Activated CD4-positive, alpha-beta T cell treated with anti-CD3 and anti-CD28 coated beads for 36 hours (primary cell): ENCODE measurements at regions of chr5 and their contacts with region 1.

Region 1: DNA sequence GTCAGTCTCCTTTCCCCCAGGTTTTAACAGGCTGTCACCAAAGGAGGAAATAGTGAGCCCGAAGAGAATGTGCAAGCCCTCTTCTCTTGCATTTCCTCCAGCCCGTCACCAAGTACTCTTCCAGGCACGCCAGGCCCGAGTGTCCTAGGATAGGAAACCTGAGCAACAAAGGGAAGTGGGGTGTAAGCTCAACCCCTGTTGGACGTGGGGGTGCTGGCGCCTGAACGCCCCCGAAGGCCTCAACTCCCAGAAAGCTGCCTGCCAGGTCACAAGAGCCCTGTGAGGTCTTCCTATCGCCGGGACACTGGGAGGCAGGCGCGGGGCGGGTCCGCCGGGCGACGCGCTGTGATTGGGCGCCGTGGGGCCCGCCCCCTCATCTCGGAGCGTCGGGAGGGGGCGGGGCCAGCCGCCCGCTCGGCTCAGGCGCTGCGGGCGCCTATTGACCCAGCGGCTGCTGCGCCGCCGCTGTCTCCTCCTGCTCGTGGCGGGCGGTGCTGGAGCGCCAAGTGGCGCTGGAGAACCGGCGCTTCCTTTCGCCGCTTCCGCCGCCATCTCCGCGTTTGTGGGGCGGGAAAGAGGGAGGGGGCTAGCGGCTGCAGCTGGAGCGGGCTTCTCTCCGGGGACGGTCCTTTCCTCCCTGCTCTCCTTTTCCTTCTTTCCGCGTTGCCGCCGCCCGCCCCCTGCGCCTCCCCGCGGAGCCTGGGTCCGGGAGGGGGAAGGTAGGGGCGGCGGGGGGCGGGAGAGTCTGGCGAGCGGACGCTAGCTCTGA is 572 bp upstream of the MAN2A1 start:
- DNase-seq: peak; percentile 87
- ATAC-seq: peak; percentile 82
- H3K4me3 Mint-ChIP-seq: peak overlapping the region; percentile 95
- H3K27ac Mint-ChIP-seq: peak overlapping the region; percentile 92
- H3K4me1 Mint-ChIP-seq: peaks cover 36% of the 10 kb centered on the region
- H3K27me3 Mint-ChIP-seq: no peaks in the 10 kb centered on the region

Region 2: DNA sequence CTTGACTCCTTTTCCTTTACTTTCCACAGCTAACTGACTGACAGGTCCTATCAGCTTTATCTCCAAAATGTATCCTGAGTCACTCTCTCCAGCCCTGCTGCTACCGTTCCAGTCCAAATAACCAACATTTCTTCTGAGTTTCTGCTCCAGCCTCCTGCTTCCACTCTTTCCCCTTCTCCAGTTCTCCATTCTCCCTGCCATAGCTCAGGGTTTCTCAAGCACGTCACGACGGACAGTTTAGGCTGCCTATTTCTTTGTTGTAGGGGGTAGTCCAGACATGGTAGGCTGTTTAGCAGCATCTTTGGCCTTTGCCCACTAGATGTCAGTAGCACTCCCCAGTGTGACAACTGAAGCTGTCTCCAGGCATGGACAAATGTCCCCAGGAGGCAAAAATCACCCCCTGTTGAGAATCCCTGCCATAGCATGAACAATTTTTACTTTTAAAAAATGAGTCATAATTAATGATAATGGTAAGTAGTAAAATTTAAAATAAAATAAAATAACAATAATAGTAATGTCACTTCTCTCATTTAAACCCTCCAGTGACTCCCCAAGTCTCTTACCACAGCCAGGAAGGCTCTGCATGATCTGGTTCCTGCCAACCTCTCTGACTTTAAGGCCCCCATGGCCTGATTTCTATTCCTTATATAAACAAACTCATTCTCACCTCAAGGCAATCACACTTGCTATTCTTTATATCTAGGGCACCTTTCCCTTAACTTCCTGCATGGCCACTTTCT is 1046.8 kb before region 1 on chr5:
- CTCF ChIA-PET with region 1: interaction called, 3 read pairs
- POLR2A ChIA-PET with region 1: no interaction called
- intact Hi-C with region 1: loop called in 1 of 2 experiments (anchors 2 kb)
- DNase-seq: peak; percentile 71
- ATAC-seq: peak; percentile 98
- H3K4me3 Mint-ChIP-seq: no peak overlapping the region
- H3K27ac Mint-ChIP-seq: no peak overlapping the region
- H3K4me1 Mint-ChIP-seq: peaks cover 3% of the 10 kb centered on the region
- H3K27me3 Mint-ChIP-seq: peaks cover 3% of the 10 kb centered on the region

Region 3: GRCh38 chr5:109485030-109485429 is 204.1 kb before region 1 on chr5:
- CTCF ChIA-PET with region 1: no interaction called
- POLR2A ChIA-PET with region 1: no interaction called
- intact Hi-C with region 1: no loop called
- DNase-seq: no peak
- ATAC-seq: no peak
- H3K4me3 Mint-ChIP-seq: no peak overlapping the region
- H3K27ac Mint-ChIP-seq: no peak overlapping the region
- H3K4me1 Mint-ChIP-seq: no peaks in the 10 kb centered on the region
- H3K27me3 Mint-ChIP-seq: no peaks in the 10 kb centered on the region

Region 4: GRCh38 chr5:109676920-109677319 is 12.2 kb before region 1 on chr5:
- CTCF ChIA-PET with region 1: interaction called, 17 read pairs
- POLR2A ChIA-PET with region 1: no interaction called
- intact Hi-C with region 1: no loop called
- DNase-seq: no peak
- ATAC-seq: no peak
- H3K4me3 Mint-ChIP-seq: no peak overlapping the region
- H3K27ac Mint-ChIP-seq: no peak overlapping the region
- H3K4me1 Mint-ChIP-seq: no peaks in the 10 kb centered on the region
- H3K27me3 Mint-ChIP-seq: peaks cover 16% of the 10 kb centered on the region

Region 5: GRCh38 chr5:109921735-109922380 is 232.7 kb after region 1 on chr5:
- CTCF ChIA-PET with region 1: no interaction called
- POLR2A ChIA-PET with region 1: no interaction called
- intact Hi-C with region 1: loop called (anchors 5 to 10 kb)
- DNase-seq: peak; percentile 64
- ATAC-seq: peak; percentile 85
- H3K4me3 Mint-ChIP-seq: no peak overlapping the region
- H3K27ac Mint-ChIP-seq: peak overlapping the region; percentile 93
- H3K4me1 Mint-ChIP-seq: peaks cover 37% of the 10 kb centered on the region
- H3K27me3 Mint-ChIP-seq: no peaks in the 10 kb centered on the region

Region 6: DNA sequence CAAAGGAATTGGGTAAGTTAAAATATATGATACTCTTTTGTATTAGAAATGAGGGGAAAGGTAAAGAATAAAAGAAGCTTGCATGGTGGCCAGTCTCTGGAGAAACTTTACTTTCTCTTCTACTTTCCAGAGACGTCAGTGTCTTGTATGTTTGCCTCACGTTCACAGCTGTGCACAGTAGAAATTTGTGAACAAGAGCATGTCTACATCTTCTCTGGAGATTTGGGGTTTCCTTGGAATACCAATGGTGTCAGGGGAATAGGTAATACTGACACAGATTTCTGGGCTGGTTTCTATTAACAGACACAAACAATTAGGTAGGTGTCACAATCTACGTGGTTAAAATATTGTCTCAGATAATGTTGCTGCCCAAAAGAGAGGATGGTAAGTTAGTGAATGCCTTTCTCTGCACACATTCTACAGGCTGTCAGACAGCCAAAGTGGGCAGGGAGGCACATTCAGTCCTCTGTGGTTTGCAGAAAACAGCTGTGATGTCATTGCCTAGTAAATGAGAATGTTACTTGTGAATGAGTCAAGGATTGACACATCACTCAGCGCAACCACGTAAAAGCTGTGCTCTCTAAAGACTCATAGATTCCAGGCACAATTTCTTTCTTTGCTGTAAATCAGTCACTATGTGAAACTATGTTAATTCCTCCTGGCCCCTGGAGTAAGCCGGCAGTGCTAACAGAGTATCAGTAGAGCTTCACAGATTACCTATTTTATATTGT is 397.7 kb after region 1 on chr5:
- CTCF ChIA-PET with region 1: no interaction called
- POLR2A ChIA-PET with region 1: interaction called, 3 read pairs
- intact Hi-C with region 1: loop called (anchors 1 to 2 kb)
- DNase-seq: peak; percentile 81
- ATAC-seq: peak; percentile 90
- H3K4me3 Mint-ChIP-seq: peak overlapping the region; percentile 32
- H3K27ac Mint-ChIP-seq: peak overlapping the region; percentile 89
- H3K4me1 Mint-ChIP-seq: peaks cover 57% of the 10 kb centered on the region
- H3K27me3 Mint-ChIP-seq: no peaks in the 10 kb centered on the region

Region 7: DNA sequence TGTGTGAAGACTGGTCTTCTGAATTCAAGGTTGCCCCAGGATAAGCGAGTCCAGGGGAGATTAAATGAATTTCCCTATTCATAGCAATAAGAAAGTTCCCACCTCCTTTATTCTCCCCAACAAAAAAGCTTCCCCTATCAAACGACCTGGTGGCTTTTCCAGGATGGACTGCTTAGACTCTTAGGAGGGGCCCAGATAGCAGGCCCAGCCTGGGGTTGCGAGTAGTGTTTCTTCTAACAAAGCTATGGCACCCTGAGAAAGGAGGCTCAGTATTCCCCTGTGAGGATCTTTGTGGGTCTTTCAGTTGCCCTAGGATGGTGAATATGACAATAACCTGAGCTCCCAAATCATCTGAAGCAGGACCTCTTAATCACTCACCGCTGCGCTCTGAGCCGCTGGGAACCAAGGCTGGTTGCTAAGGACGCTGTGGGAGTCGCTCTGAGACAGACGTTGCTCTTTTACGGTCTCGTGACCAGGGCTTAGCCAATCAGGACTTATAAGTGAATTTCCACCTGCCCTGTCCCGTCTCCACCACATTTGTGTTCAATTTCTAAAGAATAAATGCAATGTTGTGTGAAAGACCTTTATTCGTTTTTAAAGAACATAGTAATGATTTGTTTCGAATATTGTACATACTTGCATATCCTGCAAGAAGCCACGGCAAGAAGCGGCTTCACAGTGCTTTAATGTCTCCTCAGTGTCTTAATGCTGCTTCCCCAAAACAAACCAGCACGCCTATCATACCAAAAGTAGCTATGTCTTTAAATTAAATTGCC is 1037.3 kb after region 1 on chr5 and contains the start of gene TMEM232:
- CTCF ChIA-PET with region 1: no interaction called
- POLR2A ChIA-PET with region 1: no interaction called
- intact Hi-C with region 1: loop called in 1 of 2 experiments (anchors 5 kb)
- DNase-seq: peak; percentile 87
- ATAC-seq: peak; percentile 100
- H3K4me3 Mint-ChIP-seq: peak within 1 kb of the TSS; percentile 65
- H3K27ac Mint-ChIP-seq: peak within 1 kb of the TSS; percentile 70
- H3K4me1 Mint-ChIP-seq: no peaks in the 10 kb centered on the region
- H3K27me3 Mint-ChIP-seq: no peaks in the 10 kb centered on the region
- total RNA-seq, gene TMEM232: 0.30 to 1.2 TPM